ENCODE measurements at regions of chr12 and their contacts with region 1.

Region 1: GRCh38 chr12:6533923-6534694 is at the start of gene GAPDH:
- DNase-seq: peak; percentile 97
- ATAC-seq: peak; percentile 51
- H3K4me3 ChIP-seq: peak within 1 kb of the TSS; percentile 66
- H3K27ac ChIP-seq: peak within 1 kb of the TSS; percentile 94
- H3K4me1 ChIP-seq: peaks cover 12% of the 10 kb centered on the region
- H3K27me3 ChIP-seq: no peaks in the 10 kb centered on the region
- CTCF ChIP-seq: 0 out of 2 replicates have a peak, but pooled peaks have one; percentile 3
- POLR2A ChIP-seq: peak; percentile 100
- RAD21 ChIP-seq: no peak
- total RNA-seq, gene GAPDH: 11,536 and 12,939 TPM in 2 replicates

Region 2: DNA sequence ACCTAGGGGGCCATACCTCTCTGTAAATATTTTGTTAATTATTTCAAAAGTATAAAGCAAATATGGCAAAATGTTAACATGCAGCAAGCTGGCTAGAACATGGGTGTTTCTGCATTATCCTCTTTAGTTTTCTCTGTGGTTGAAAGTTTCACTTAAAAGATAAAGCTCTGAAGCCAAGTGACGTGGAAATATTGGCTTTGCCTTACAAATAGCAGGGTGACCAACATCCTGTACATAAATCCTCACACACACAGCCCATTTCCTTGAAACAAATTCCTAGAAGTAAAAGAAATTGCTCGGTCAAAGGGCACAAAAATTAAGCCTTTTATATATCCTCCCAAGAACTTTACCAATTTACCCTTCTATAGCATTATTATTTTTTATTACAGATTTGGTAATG is 399.0 kb before region 1 on chr12:
- CTCF ChIA-PET with region 1: no interaction called
- POLR2A ChIA-PET with region 1: no interaction called
- dilution Hi-C with region 1: no loop called
- in situ Hi-C with region 1: no loop called
- intact Hi-C with region 1: no loop called
- DNase-seq: peak; percentile 44
- ATAC-seq: no peak
- H3K4me3 ChIP-seq: no peak overlapping the region
- H3K27ac ChIP-seq: no peak overlapping the region
- H3K4me1 ChIP-seq: peaks cover 2% of the 10 kb centered on the region; the same call in 1 of the 2 replicates
- H3K27me3 ChIP-seq: no peaks in the 10 kb centered on the region
- CTCF ChIP-seq: no peak
- POLR2A ChIP-seq: no peak
- RAD21 ChIP-seq: no peak

Region 3: DNA sequence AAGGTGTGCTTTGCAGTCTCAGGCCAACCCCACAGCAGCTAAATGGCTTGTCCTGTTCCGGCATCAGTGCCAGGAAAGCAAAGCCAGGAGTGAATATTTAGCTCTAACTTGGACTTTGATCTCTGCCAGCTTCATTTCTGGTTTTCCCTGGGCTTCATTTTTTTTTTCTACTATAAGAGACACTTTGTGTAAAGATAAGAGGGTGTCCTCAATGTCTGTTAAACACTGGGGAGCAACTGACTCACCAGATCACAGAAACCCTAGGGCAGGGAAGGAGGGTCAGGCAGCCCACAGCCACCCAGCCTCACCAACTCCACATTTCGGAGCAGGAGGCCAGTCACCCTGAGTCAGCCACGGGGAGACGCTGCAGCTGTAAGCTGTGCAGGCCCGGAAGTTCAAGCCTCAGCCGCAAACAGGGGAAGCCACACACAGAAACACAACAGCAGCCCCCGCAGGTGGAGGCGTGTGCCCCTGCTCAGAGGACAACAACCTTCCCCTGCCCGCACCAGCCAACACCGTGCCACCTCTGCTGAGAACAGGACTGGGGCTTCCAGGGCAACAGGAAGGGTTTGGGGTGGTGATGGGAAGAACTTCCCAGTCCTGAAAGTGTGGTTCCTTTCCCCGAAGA is 198.5 kb before region 1 on chr12:
- CTCF ChIA-PET with region 1: interaction called, 3 read pairs
- POLR2A ChIA-PET with region 1: interaction called, 6 read pairs
- dilution Hi-C with region 1: no loop called
- in situ Hi-C with region 1: no loop called
- intact Hi-C with region 1: loop called (anchors 2 kb)
- DNase-seq: peak; percentile 88
- ATAC-seq: peak; percentile 30
- H3K4me3 ChIP-seq: peak overlapping the region; percentile 15
- H3K27ac ChIP-seq: peak overlapping the region; percentile 94
- H3K4me1 ChIP-seq: peaks cover 64% of the 10 kb centered on the region
- H3K27me3 ChIP-seq: no peaks in the 10 kb centered on the region
- CTCF ChIP-seq: peak; percentile 69
- POLR2A ChIP-seq: peak; percentile 64
- RAD21 ChIP-seq: peak; percentile 67

Region 4: DNA sequence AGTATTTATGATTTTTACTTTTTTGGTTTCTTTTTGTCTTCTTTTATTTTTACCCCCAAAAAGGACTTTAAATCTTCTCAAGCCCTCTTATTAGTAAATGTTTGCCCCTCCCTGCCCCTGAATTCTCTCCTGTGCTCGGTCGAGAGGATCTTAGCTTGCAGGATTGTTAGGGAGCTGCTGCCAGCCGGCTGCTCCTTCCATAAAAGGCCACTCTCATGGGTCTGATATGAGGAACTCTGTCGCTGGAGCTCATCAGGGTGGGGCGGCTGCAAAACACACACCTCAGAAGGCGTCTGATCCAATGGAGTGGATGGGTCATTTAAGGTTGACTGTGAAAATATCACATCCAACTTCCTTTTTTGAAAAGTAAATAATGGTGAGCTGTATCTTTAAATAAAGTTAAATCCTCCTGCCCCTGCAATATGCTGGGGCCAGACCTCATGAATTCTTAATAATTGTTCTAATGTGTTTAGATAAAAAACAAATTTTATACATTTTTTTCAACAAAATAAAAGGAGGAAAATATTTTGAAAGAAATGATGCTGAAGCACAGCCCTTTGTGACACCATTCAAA is 141.5 kb before region 1 on chr12:
- CTCF ChIA-PET with region 1: no interaction called
- POLR2A ChIA-PET with region 1: interaction called, 24 read pairs
- dilution Hi-C with region 1: no loop called
- in situ Hi-C with region 1: no loop called
- intact Hi-C with region 1: no loop called
- DNase-seq: no peak
- ATAC-seq: no peak
- H3K4me3 ChIP-seq: no peak overlapping the region
- H3K27ac ChIP-seq: no peak overlapping the region
- H3K4me1 ChIP-seq: no peaks in the 10 kb centered on the region
- H3K27me3 ChIP-seq: no peaks in the 10 kb centered on the region
- CTCF ChIP-seq: no peak
- POLR2A ChIP-seq: no peak
- RAD21 ChIP-seq: no peak

Region 5: GRCh38 chr12:6493497-6494257 is 40.4 kb before region 1 on chr12 and contains the start of gene NCAPD2:
- CTCF ChIA-PET with region 1: interaction called, 3 read pairs
- POLR2A ChIA-PET with region 1: interaction called, 37 read pairs
- dilution Hi-C with region 1: no loop called
- in situ Hi-C with region 1: no loop called
- intact Hi-C with region 1: loop called (anchors 2 kb)
- DNase-seq: peak; percentile 93
- ATAC-seq: peak; percentile 97
- H3K4me3 ChIP-seq: peak within 1 kb of the TSS; percentile 83
- H3K27ac ChIP-seq: peak within 1 kb of the TSS; percentile 94
- H3K4me1 ChIP-seq: no peaks in the 10 kb centered on the region; the same call in 1 of the 2 replicates
- H3K27me3 ChIP-seq: no peaks in the 10 kb centered on the region
- CTCF ChIP-seq: no peak
- POLR2A ChIP-seq: peak; percentile 93
- RAD21 ChIP-seq: no peak
- total RNA-seq, gene NCAPD2: 52.8 and 57.9 TPM in 2 replicates

Region 6: GRCh38 chr12:6547987-6548386 is 13.9 kb after region 1 on chr12:
- CTCF ChIA-PET with region 1: interaction called, 8 read pairs
- POLR2A ChIA-PET with region 1: interaction called, 48 read pairs
- dilution Hi-C with region 1: no loop called
- in situ Hi-C with region 1: no loop called
- intact Hi-C with region 1: no loop called
- DNase-seq: peak; percentile 89
- ATAC-seq: peak; percentile 69
- H3K4me3 ChIP-seq: peak overlapping the region; percentile 32
- H3K27ac ChIP-seq: peak overlapping the region; percentile 100
- H3K4me1 ChIP-seq: peaks cover 44% of the 10 kb centered on the region
- H3K27me3 ChIP-seq: no peaks in the 10 kb centered on the region
- CTCF ChIP-seq: no peak
- POLR2A ChIP-seq: no peak
- RAD21 ChIP-seq: no peak

Measured in IMR-90 (cell line).